K562 (cell line): ENCODE measurements at regions of chrX and their contacts with region 1.

Region 1: DNA sequence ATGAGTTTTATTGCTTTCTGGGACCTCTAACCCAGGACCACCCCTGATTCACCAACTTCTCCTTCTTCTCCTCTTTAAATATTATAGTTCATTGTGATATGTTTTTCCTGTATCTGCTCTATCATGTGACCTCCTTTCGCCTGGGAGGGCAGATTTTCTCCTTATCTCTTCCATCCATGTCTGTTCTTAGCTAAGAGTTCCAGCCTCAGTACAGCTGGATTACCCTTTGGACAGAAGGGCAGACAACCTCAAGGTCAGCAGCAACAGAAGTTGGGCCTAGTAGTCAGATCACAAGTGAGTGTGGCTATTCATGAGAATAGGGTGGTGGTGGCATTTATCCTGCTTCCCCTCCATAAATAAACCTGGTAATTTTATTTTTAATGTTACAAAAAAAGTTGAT is 5.7 kb upstream of the XK start:
- DNase-seq: peak; percentile 22 to 61 (median 31)
- ATAC-seq: peak; percentile 79
- H3K4me3 ChIP-seq: no peak overlapping the region
- H3K27ac ChIP-seq: no peak overlapping the region
- H3K4me1 ChIP-seq: peaks cover 0 to 23% of the 10 kb centered on the region in 2 experiments; a peak in 2 of 5 replicates
- H3K27me3 ChIP-seq: no peaks in the 10 kb centered on the region
- CTCF ChIP-seq: no peak
- EP300 ChIP-seq: peak; percentile 62
- POLR2A ChIP-seq: no peak
- RAD21 ChIP-seq: no peak

Region 2: GRCh38 chrX:37651921-37652452 is 27.9 kb before region 1 on chrX:
- CTCF ChIA-PET with region 1: no interaction called
- POLR2A ChIA-PET with region 1: interaction called, 3 read pairs
- in situ Hi-C with region 1: no loop called
- intact Hi-C with region 1: loop called (anchors 2 kb)
- DNase-seq: peak in 1 of 4 experiments; percentile 23
- ATAC-seq: peak; percentile 26
- H3K4me3 ChIP-seq: no peak overlapping the region
- H3K27ac ChIP-seq: peak overlapping the region; percentile 92
- H3K4me1 ChIP-seq: peaks cover 3 to 28% of the 10 kb centered on the region in 2 experiments; a peak in 3 of 5 replicates
- H3K27me3 ChIP-seq: no peaks in the 10 kb centered on the region
- CTCF ChIP-seq: no peak
- EP300 ChIP-seq: no peak
- POLR2A ChIP-seq: no peak
- RAD21 ChIP-seq: no peak

Region 3: DNA sequence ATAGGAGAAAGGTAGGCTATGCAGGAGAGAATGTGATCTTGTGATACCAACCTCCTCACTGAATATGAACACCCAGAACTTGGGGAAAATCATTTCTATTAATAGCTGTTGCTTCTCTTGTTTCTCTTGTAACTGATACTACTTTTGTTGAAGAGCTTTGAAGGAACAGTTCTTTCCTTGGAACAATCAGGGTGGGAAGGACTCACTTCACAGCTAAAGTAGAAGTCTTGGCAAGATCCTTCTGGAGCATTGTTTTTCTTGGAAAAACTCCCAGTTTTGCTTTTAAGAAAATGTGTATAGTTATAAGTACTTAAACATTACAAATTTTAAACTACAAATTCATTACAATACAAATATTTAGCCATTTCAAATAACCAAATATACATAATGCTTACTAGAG is 13.4 kb before region 1 on chrX:
- CTCF ChIA-PET with region 1: no interaction called
- POLR2A ChIA-PET with region 1: no interaction called
- in situ Hi-C with region 1: no loop called
- intact Hi-C with region 1: no loop called
- DNase-seq: no peak
- ATAC-seq: no peak
- H3K4me3 ChIP-seq: no peak overlapping the region
- H3K27ac ChIP-seq: no peak overlapping the region
- H3K4me1 ChIP-seq: no peaks in the 10 kb centered on the region
- H3K27me3 ChIP-seq: no peaks in the 10 kb centered on the region
- CTCF ChIP-seq: no peak
- EP300 ChIP-seq: no peak
- POLR2A ChIP-seq: no peak
- RAD21 ChIP-seq: no peak